ENCODE measurements at regions of chr5 and their contacts with region 1.

Region 1: GRCh38 chr5:137344723-137345322 is 154.3 kb downstream of the SPOCK1 start:
- DNase-seq: peak; percentile 32
- CTCF ChIP-seq: peak; percentile 70

Region 2: GRCh38 chr5:137498736-137499505 is 154.1 kb after region 1 on chr5 and contains the start of gene SPOCK1:
- in situ Hi-C with region 1: loop called (anchors 25 kb)
- DNase-seq: peak; percentile 96
- CTCF ChIP-seq: peak; percentile 96

Measured in GM13977 (cell line).